ENCODE measurements at regions of chr13 and their contacts with region 1.

Region 1: DNA sequence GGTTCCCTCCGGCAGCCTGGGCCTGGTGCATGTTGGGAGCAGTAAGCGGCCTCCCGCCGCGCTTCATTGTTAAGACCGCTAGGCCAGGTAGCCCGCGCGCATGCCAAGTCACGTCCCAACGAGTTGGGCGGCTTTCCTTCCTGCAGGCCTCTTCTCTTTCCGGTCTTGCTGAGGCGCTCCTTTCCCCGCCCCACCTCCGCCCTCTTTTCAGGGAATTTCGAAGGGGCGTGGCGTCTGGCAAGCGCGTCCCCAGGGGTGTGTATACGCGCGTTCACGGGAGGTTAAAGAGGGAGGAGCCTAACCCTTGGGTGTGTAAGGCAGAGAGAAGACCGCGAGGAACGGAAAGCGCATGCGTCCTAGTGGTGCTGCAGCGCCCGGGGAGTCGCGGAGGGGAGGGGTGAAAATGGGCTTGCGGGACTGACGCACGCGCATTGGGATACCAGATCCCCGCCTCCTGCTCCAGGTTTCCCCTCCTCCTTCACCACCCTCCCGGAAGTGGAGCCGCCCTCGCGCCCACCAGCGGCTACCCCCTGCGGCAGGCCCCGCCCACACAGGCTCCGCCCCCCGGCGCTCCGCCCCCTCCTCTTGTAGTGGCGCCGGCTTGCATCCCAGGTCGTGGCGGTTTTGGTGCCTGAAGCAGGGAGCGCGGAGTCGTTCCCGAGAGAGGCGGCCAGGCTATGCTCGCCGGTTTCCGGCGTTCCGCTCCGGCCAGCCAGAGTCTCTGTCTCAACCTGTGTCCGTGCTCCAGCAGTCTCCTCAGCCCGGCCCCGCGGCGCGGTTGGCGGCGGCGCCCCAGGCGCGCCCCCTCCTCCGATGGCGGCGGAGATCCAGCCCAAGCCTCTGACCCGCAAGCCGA is at the start of gene WDFY2:
- DNase-seq: peak; percentile 100
- H3K4me3 Mint-ChIP-seq: peak within 1 kb of the TSS; percentile 90
- H3K27ac Mint-ChIP-seq: peak within 1 kb of the TSS; percentile 97
- H3K4me1 Mint-ChIP-seq: peaks cover 37% of the 10 kb centered on the region
- H3K27me3 Mint-ChIP-seq: peaks cover 6% of the 10 kb centered on the region
- total RNA-seq, gene WDFY2: 9.1 and 11.1 TPM in 2 replicates

Region 2: GRCh38 chr13:49585220-49586157 is 1998.6 kb before region 1 on chr13 and contains the start of gene RCBTB1:
- intact Hi-C with region 1: loop called (anchors 5 kb)
- DNase-seq: peak; percentile 92
- H3K4me3 Mint-ChIP-seq: peak within 1 kb of the TSS; percentile 90
- H3K27ac Mint-ChIP-seq: peak within 1 kb of the TSS; percentile 79
- H3K4me1 Mint-ChIP-seq: peaks cover 29% of the 10 kb centered on the region
- H3K27me3 Mint-ChIP-seq: peaks cover 5% of the 10 kb centered on the region
- total RNA-seq, gene RCBTB1: 14.8 and 16.2 TPM in 2 replicates

Region 3: DNA sequence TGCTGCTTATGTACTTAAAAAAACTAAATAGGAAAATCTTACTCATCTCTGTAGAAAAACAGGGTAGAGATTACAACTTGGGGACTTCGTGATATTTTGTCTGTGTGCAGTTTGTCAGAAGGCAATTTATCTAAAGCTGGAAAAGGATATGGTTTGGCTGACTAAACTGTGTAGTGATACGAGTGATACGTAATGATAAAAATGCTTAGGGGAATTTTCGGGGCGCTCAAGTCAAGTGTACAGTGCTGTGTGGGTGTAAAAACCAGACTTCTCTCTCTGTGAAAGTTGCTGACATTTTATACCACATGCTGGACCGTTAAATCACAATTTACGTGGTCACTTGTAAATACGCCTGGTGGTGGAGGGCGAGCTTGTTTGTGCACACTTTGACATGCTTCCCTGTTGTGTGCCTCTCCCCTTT is 1347.2 kb before region 1 on chr13:
- intact Hi-C with region 1: no loop called
- DNase-seq: peak; percentile 83
- H3K4me3 Mint-ChIP-seq: peak overlapping the region; percentile 23
- H3K27ac Mint-ChIP-seq: peak overlapping the region; percentile 84
- H3K4me1 Mint-ChIP-seq: peaks cover 34% of the 10 kb centered on the region
- H3K27me3 Mint-ChIP-seq: peaks cover 29% of the 10 kb centered on the region

Region 4: GRCh38 chr13:51534041-51534817 is 49.9 kb before region 1 on chr13:
- intact Hi-C with region 1: loop called (anchors 5 kb)
- DNase-seq: peak; percentile 84
- H3K4me3 Mint-ChIP-seq: peak overlapping the region; percentile 34
- H3K27ac Mint-ChIP-seq: no peak overlapping the region
- H3K4me1 Mint-ChIP-seq: peaks cover 40% of the 10 kb centered on the region
- H3K27me3 Mint-ChIP-seq: no peaks in the 10 kb centered on the region

Region 5: GRCh38 chr13:51619614-51620013 is 35.5 kb after region 1 on chr13:
- intact Hi-C with region 1: loop called (anchors 1 kb)
- DNase-seq: no peak
- H3K4me3 Mint-ChIP-seq: no peak overlapping the region
- H3K27ac Mint-ChIP-seq: peak overlapping the region; percentile 69
- H3K4me1 Mint-ChIP-seq: peaks cover 31% of the 10 kb centered on the region
- H3K27me3 Mint-ChIP-seq: no peaks in the 10 kb centered on the region

Region 6: GRCh38 chr13:51714663-51715168 is 130.6 kb after region 1 on chr13:
- intact Hi-C with region 1: no loop called
- DNase-seq: no peak
- H3K4me3 Mint-ChIP-seq: no peak overlapping the region
- H3K27ac Mint-ChIP-seq: no peak overlapping the region
- H3K4me1 Mint-ChIP-seq: no peaks in the 10 kb centered on the region
- H3K27me3 Mint-ChIP-seq: no peaks in the 10 kb centered on the region

Region 7: DNA sequence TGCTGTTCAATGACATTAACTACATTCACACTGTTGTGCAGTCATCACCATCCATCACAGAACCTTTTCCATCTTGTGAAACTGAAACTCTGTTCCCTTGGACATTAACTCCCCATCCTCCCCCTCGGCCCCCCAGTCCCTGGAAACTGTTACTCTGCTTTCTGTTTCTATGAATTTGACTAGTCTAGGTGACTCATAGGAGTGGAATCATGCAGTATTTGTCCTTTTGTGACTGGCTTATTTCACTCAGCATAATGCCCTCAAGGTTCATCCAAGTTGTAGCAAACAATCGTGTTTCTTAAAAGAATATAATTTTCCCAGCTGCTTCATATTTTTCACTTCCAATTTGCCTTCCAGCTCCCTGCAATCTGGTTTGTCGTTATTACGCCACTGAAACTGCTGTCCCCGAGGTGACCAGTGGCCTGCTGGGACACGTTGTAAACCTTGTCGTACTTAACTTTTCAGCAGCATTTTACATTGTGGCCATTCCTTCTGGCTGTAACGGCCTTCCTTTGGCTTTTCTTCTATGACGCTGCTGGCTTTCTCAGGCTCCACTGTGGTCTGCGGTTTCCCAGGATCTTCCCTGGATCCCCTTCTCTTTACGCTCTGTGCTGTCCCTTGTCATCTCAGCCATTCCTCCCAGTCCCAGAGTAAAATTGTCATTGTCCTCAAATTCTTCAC is 145.9 kb after region 1 on chr13:
- intact Hi-C with region 1: loop called (anchors 2 kb)
- DNase-seq: peak; percentile 74
- H3K4me3 Mint-ChIP-seq: no peak overlapping the region
- H3K27ac Mint-ChIP-seq: no peak overlapping the region
- H3K4me1 Mint-ChIP-seq: peaks cover 11% of the 10 kb centered on the region
- H3K27me3 Mint-ChIP-seq: no peaks in the 10 kb centered on the region

Region 8: GRCh38 chr13:51803422-51804294 is 219.6 kb after region 1 on chr13 and contains the start of gene DHRS12:
- intact Hi-C with region 1: loop called (anchors 1 kb)
- DNase-seq: peak; percentile 95
- H3K4me3 Mint-ChIP-seq: peak within 1 kb of the TSS; percentile 97
- H3K27ac Mint-ChIP-seq: peak within 1 kb of the TSS; percentile 98
- H3K4me1 Mint-ChIP-seq: peaks cover 39% of the 10 kb centered on the region
- H3K27me3 Mint-ChIP-seq: no peaks in the 10 kb centered on the region
- total RNA-seq, gene DHRS12: 3.2 and 3.9 TPM in 2 replicates

Region 9: GRCh38 chr13:52450012-52450792 is 866.1 kb after region 1 on chr13 and contains the start of gene VPS36:
- intact Hi-C with region 1: loop called (anchors 10 kb)
- DNase-seq: peak; percentile 99
- H3K4me3 Mint-ChIP-seq: peak within 1 kb of the TSS; percentile 93
- H3K27ac Mint-ChIP-seq: peak within 1 kb of the TSS; percentile 92
- H3K4me1 Mint-ChIP-seq: peaks cover 33% of the 10 kb centered on the region
- H3K27me3 Mint-ChIP-seq: no peaks in the 10 kb centered on the region
- total RNA-seq, gene VPS36: 42.0 and 43.0 TPM in 2 replicates

Measured in activated CD4-positive, alpha-beta T cell treated with anti-CD3 and anti-CD28 coated beads, Interleukin-2, amount 10 ng/mL, durations not matched to agents 24 days and 14 days (primary cell).